PC-3 (cell line): ENCODE measurements at regions of chr10 and their contacts with region 1.

Region 1: DNA sequence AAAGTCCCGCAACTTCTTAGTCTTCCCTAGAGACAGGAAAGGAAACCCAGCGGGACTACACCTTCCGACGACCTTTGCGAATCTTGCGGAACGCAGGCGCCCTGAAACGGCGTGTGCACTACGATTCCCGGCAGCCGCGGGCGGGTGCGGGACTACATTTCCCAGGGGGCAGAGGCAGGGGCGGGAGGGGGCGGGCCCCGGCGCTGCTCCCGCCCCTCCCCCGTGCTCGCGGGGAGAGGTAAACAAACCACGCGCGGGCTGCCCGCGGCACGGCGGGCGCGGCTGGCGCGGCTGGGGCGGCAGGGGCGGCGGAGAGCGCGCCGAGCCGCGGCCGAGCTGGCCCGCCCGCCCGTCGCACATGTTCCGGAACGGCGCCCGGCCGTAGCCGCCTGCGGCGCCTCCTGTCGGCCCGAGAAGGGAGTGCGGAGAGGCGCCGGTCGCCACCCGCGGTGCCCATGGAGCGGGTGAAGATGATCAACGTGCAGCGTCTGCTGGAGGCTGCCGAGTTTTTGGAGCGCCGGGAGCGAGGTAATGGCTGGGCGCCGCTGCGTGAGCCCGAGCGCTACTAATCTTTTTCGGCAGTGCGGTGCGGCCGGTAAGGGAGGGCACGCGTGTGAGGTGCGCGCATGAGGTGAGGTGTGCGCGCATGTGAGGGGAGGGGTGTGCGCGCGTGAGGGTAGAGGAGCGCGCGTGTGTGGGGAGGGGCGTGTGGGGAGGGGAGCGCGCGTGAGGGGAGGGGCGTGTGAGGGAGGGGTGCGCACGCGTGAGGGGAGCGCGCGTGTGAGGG is 18.5 kb downstream of the MXI1 start:
- DNase-seq: peak; percentile 90
- ATAC-seq: peak; percentile 89
- H3K4me3 ChIP-seq: peak overlapping the region; percentile 81
- H3K27ac ChIP-seq: no peak overlapping the region
- H3K4me1 ChIP-seq: 0 out of 2 replicates have a peak, but pooled peaks cover 4% of the 10 kb centered on the region
- H3K27me3 ChIP-seq: no peaks in the 10 kb centered on the region
- CTCF ChIP-seq: peak; percentile 46

Region 2: DNA sequence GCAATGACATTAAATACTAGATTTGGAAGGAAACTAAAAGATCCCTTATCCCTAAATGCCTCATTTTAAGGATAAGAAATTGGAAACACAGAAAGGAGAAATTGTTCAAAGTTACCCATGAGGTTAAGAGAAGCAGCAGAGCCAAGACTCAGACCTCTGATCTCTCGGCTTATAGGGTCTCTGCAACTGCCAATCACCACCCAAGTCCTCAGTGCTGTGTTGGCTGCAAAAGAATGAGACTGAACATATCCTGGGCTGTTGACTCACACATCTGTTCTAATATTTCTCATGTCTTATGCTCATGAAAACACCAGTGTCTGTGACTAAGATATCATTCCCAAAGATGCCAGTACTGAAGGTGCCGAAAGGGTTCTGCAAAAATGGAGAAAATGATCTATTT is 456.0 kb before region 1 on chr10:
- CTCF ChIA-PET with region 1: no interaction called
- POLR2A ChIA-PET with region 1: no interaction called
- intact Hi-C with region 1: no loop called
- DNase-seq: no peak
- ATAC-seq: no peak
- H3K4me3 ChIP-seq: no peak overlapping the region
- H3K27ac ChIP-seq: no peak overlapping the region
- H3K4me1 ChIP-seq: 0 out of 2 replicates have a peak, but pooled peaks cover 3% of the 10 kb centered on the region
- H3K27me3 ChIP-seq: no peaks in the 10 kb centered on the region
- CTCF ChIP-seq: no peak

Region 3: GRCh38 chr10:110137142-110137545 is 88.8 kb before region 1 on chr10:
- CTCF ChIA-PET with region 1: interaction called, 6 read pairs
- POLR2A ChIA-PET with region 1: no interaction called
- intact Hi-C with region 1: loop called (anchors 1 kb)
- DNase-seq: peak; percentile 72
- ATAC-seq: peak; percentile 55
- H3K4me3 ChIP-seq: no peak overlapping the region
- H3K27ac ChIP-seq: no peak overlapping the region
- H3K4me1 ChIP-seq: no peaks in the 10 kb centered on the region
- H3K27me3 ChIP-seq: no peaks in the 10 kb centered on the region
- CTCF ChIP-seq: peak; percentile 85

Region 4: DNA sequence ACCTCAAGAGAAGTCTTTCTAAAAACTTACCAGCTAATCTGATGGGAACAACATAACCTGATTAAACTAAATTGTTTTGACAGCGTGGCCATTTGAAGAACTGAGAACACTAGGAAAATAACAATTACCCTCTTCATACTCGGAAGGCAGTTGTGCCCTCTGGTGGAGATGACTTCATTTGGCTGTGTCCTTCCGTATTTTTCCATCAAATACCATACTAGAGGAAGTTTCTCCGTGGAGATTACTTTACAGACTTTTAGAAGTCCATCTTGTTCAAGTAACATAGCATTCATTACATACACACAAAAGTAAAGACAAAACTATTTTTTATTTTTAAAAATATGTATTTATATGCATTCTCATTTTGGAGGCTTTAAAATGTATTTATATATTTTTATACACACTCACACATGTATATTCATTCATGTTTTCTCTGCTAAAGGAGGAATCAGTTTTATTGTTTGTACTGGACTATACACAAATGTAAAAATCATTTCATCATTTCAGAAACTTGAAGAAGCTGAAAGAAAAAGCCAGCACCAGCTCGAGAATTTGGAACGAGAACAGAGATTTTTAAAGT is 53.5 kb after region 1 on chr10:
- CTCF ChIA-PET with region 1: no interaction called
- POLR2A ChIA-PET with region 1: no interaction called
- intact Hi-C with region 1: loop called (anchors 5 kb)
- DNase-seq: peak; percentile 62
- ATAC-seq: peak; percentile 63
- H3K4me3 ChIP-seq: 0 out of 2 replicates have a peak overlapping the region, but pooled peaks have one; percentile 32
- H3K27ac ChIP-seq: no peak overlapping the region
- H3K4me1 ChIP-seq: no peaks in the 10 kb centered on the region
- H3K27me3 ChIP-seq: no peaks in the 10 kb centered on the region
- CTCF ChIP-seq: peak; percentile 75